H1 (cell line): ENCODE measurements at regions of chr12 and their contacts with region 1.

Region 1: DNA sequence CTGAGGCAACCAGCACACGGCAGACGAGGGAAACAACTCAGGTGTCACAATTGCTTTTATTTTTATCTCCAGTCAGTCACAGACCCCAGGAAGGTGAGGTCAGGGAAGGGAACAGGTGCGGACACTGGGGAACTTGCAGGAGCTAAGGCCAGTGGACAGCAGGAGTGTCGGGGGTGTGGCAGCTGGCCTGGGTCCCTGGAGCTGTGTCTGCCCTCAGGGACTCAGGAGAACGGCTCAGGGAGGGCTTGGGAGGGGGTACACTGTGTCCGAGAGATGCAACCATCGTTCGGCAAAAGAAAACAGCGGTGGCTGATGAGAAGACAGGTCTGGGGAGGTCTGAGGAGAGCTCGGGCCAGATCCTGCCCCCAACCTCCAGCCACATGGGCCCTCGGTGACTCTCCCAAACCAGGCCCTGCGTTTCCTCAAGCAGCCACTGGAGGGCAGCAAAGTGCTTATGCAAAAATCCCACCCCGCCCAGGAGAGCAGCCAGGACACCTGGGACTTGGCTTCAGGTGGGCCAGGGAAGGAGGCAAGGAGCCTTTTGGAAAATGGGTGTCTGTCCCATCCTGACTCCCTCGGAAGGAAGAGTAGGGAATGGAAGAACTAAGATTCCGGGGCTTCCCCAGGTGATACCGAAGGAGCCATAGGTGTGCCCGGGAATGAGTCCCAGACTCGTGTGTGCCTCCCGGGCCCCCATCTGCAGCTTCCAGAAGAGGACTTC is 24.1 kb upstream of the BCDIN3D start:
- DNase-seq: peak; percentile 54 to 96
- H3K4me3 ChIP-seq: no peak overlapping the region
- H3K27ac ChIP-seq: no peak overlapping the region
- H3K4me1 ChIP-seq: peaks cover 0 to 3% (median 1%) of the 10 kb centered on the region in 4 experiments; a peak in 3 of 7 replicates
- H3K27me3 ChIP-seq: peaks cover 0 to 2% (median 0%) of the 10 kb centered on the region in 4 experiments; a peak in 1 of 7 replicates
- CTCF ChIP-seq: peak; percentile 90 to 98 (median 93)
- EP300 ChIP-seq: no peak
- POLR2A ChIP-seq: no peak
- RAD21 ChIP-seq: peak; percentile 94 to 95

Region 2: GRCh38 chr12:49776413-49776812 is 90.6 kb before region 1 on chr12:
- CTCF ChIA-PET with region 1: interaction called, 21 read pairs
- POLR2A ChIA-PET with region 1: no interaction called
- DNase-seq: peak; percentile 60 to 76
- H3K4me3 ChIP-seq: no peak overlapping the region
- H3K27ac ChIP-seq: no peak overlapping the region
- H3K4me1 ChIP-seq: peaks cover 0 to 2% (median 0%) of the 10 kb centered on the region in 4 experiments; a peak in 2 of 7 replicates
- H3K27me3 ChIP-seq: no peaks in the 10 kb centered on the region
- CTCF ChIP-seq: peak; percentile 87 to 91 (median 90)
- EP300 ChIP-seq: no peak
- POLR2A ChIP-seq: no peak
- RAD21 ChIP-seq: peak; percentile 90 to 96

Region 3: GRCh38 chr12:49882851-49883470 is 15.9 kb after region 1 on chr12:
- CTCF ChIA-PET with region 1: interaction called, 35 read pairs
- POLR2A ChIA-PET with region 1: interaction called, 8 read pairs
- DNase-seq: no peak
- H3K4me3 ChIP-seq: no peak overlapping the region
- H3K27ac ChIP-seq: no peak overlapping the region
- H3K4me1 ChIP-seq: peaks cover 0 to 29% (median 13%) of the 10 kb centered on the region in 4 experiments; a peak in 6 of 7 replicates
- H3K27me3 ChIP-seq: no peaks in the 10 kb centered on the region; a peak in 1 of 7 replicates
- CTCF ChIP-seq: peak in 1 of 3 experiments; percentile 39; a peak in 1 of 4 replicates
- EP300 ChIP-seq: no peak
- POLR2A ChIP-seq: no peak
- RAD21 ChIP-seq: peak in 1 of 2 experiments; percentile 32; a peak in 2 of 4 replicates

Region 4: DNA sequence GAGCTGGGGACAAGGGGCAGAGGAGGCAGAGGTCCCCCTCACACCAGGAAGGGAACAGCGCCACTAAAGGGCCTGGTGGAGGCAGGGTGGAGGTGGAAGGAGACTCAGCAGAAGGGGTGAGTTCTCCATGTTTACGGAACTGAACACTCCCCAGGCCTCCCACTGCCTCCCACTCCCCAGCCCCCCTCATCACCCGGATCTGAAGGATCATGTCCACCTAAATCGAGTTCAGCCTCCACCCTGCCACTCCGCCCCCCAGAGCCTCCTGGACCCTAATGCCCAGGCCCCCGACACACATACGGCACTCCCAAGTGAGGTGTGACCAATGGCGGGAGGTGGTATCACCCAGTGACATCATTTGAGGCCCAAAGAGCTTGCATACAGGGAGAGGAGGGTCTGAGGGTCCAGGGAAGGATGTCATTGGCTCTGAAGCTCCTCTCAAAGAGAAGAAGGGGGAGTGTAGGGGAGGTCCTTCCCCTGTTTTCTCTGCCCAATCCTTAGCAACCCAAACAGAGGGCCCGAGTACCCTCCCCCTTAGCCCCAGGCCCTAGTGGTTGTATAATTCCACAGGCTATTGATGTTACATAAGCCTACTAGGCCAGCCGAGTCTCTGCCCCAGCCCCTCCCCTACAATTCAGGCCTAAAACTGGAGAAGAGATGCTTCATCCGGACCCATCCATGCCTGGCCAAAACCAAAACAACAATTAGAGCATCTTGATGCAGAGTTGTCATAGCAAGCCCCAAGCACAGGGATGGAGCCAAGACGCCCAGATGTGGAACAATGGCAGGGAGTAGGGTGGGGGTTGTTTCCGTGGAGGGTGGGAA is 35.7 kb after region 1 on chr12:
- CTCF ChIA-PET with region 1: interaction called, 107 read pairs
- POLR2A ChIA-PET with region 1: interaction called, 5 read pairs
- DNase-seq: no peak
- H3K4me3 ChIP-seq: no peak overlapping the region
- H3K27ac ChIP-seq: no peak overlapping the region
- H3K4me1 ChIP-seq: peaks cover 0 to 9% (median 1%) of the 10 kb centered on the region in 4 experiments; a peak in 5 of 7 replicates
- H3K27me3 ChIP-seq: peaks cover 0 to 19% (median 16%) of the 10 kb centered on the region in 4 experiments; a peak in 5 of 7 replicates
- CTCF ChIP-seq: peak; percentile 35 to 59 (median 57)
- EP300 ChIP-seq: no peak
- POLR2A ChIP-seq: no peak
- RAD21 ChIP-seq: peak; percentile 14 to 43; a peak in 2 of 4 replicates

Region 5: DNA sequence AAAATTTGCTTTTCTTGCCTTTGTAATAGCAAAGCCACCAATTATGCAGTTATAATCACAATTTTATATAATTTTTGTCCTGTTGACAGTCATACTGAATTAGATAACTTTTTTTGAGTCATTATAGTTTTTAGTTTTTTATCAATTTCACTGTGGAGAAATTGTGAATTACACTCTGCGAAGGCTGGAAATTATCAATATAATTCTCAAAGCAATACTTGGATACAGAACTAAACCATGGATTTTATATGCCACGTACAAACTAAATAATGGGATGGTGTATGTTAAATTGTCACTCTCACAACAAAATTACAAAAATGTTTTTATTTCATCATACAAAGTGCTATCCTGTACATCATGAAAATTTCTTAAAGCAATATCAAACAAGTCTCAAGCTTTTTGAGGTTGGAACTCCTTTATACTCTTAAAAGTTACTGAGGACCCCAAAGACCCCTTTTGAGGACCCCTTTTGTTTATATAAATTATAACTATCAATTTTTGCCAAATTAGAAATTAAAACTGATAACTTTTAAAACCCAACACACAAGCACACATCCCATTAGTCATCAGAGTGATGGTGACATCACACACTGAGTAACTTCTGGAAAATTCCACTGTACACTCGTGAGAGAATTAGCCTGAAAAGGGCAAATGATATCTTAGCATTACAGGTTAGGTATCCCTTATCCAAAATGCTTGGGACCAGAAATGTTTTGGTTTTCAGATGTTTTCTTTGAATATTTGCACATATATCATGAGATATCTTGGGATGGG is 63.7 kb after region 1 on chr12:
- CTCF ChIA-PET with region 1: interaction called, 11 read pairs
- POLR2A ChIA-PET with region 1: no interaction called
- DNase-seq: no peak
- H3K4me3 ChIP-seq: no peak overlapping the region
- H3K27ac ChIP-seq: no peak overlapping the region
- H3K4me1 ChIP-seq: no peaks in the 10 kb centered on the region
- H3K27me3 ChIP-seq: no peaks in the 10 kb centered on the region; a peak in 1 of 7 replicates
- CTCF ChIP-seq: no peak
- EP300 ChIP-seq: no peak
- POLR2A ChIP-seq: no peak
- RAD21 ChIP-seq: no peak

Region 6: GRCh38 chr12:49959570-49960465 is 92.8 kb after region 1 on chr12:
- CTCF ChIA-PET with region 1: interaction called, 137 read pairs
- POLR2A ChIA-PET with region 1: no interaction called
- DNase-seq: peak in 1 of 2 experiments; percentile 60
- H3K4me3 ChIP-seq: peak overlapping the region in 1 of 4 experiments; percentile 59; a peak in 1 of 8 replicates
- H3K27ac ChIP-seq: no peak overlapping the region
- H3K4me1 ChIP-seq: peaks cover 4 to 24% (median 17%) of the 10 kb centered on the region in 4 experiments
- H3K27me3 ChIP-seq: peaks cover 12 to 67% (median 55%) of the 10 kb centered on the region in 4 experiments
- CTCF ChIP-seq: no peak
- EP300 ChIP-seq: no peak
- POLR2A ChIP-seq: no peak; a peak in 1 of 3 replicates
- RAD21 ChIP-seq: no peak